HCT116 (cell line): ENCODE measurements at regions of chr6 and their contacts with region 1.

Region 1: GRCh38 chr6:99330159-99330558 is 19.3 kb downstream of the FAXC start:
- DNase-seq: peak; percentile 52
- ATAC-seq: peak; percentile 87
- H3K4me3 ChIP-seq: no peak overlapping the region
- H3K27ac ChIP-seq: no peak overlapping the region
- H3K4me1 ChIP-seq: no peaks in the 10 kb centered on the region
- H3K27me3 ChIP-seq: no peaks in the 10 kb centered on the region
- CTCF ChIP-seq: peak; percentile 58 to 89 (median 86)
- POLR2A ChIP-seq: no peak
- RAD21 ChIP-seq: peak; percentile 67

Region 2: GRCh38 chr6:99178168-99178567 is 152.0 kb before region 1 on chr6:
- CTCF ChIA-PET with region 1: no interaction called
- POLR2A ChIA-PET with region 1: no interaction called
- RAD21 ChIA-PET with region 1: no interaction called
- intact Hi-C with region 1: no loop called
- DNase-seq: peak; percentile 31
- ATAC-seq: peak; percentile 78
- H3K4me3 ChIP-seq: no peak overlapping the region
- H3K27ac ChIP-seq: no peak overlapping the region
- H3K4me1 ChIP-seq: peaks cover 0 to 15% of the 10 kb centered on the region in 2 experiments; a peak in 2 of 4 replicates
- H3K27me3 ChIP-seq: no peaks in the 10 kb centered on the region
- CTCF ChIP-seq: no peak
- POLR2A ChIP-seq: no peak
- RAD21 ChIP-seq: no peak

Region 3: DNA sequence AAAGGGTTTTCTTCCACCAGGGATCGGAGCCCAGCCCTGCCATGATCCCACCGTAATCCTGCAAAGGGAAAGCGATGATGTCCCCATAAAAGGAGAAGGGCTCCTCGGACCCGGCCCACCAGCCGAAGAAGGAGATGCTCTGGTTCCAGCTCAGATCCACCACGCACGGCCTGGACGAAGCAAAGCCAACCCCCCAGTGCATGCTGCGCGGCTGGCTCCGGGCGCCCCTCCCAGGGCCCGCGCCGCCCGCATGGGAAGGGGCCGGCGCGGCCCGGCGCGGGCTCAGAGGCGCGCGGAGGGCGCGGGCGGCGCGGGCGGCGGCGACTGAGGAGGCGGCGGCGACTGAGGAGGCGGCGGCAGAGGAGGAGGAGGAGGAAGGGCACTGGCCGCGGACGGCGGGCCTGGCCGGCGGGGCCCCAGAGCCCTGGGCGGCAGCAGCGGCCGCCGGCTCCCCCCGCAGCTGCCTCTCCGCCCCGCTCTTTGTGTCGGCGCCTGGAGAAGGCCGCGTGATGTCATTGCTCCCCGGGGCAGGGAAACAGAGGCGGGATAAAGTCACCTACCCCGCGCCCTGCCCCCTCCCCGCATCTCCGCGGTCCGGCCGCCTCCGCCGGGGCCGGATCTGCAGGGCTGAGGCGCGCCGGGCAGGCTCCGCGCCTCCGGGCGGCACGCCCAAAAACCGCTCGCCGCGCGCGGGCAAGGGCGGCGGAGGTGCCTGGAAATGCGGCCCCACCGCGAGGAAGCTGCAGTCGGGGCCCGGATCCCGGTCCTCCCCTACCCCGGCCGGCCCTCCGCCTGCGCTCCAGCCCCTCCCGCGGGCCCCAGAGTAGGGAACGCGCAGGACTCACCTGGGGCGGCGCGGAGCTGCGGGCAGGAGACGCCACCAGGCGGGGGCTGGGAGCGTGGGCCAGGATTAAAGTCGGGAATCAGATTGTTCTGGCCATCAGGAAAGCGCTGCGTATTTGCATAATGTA is 19.3 kb after region 1 on chr6 and contains the start of gene FAXC:
- CTCF ChIA-PET with region 1: interaction called, 10 read pairs
- POLR2A ChIA-PET with region 1: no interaction called
- RAD21 ChIA-PET with region 1: no interaction called
- intact Hi-C with region 1: no loop called
- DNase-seq: peak; percentile 16
- ATAC-seq: peak; percentile 91
- H3K4me3 ChIP-seq: peak within 1 kb of the TSS; percentile 51 to 67
- H3K27ac ChIP-seq: peak within 1 kb of the TSS; percentile 43; the same call in 1 of the 2 replicates
- H3K4me1 ChIP-seq: peaks cover 8 to 21% of the 10 kb centered on the region in 2 experiments; a peak in 3 of 4 replicates
- H3K27me3 ChIP-seq: no peaks in the 10 kb centered on the region
- CTCF ChIP-seq: peak; percentile 14 to 41 (median 29); a peak in 3 of 6 replicates
- POLR2A ChIP-seq: no peak
- RAD21 ChIP-seq: peak; percentile 51
- total RNA-seq, gene FAXC: 4.7 TPM

Region 4: GRCh38 chr6:99393698-99394531 is 63.8 kb after region 1 on chr6 and contains the start of gene COQ3:
- CTCF ChIA-PET with region 1: interaction called, 3 read pairs
- POLR2A ChIA-PET with region 1: interaction called, 3 read pairs
- RAD21 ChIA-PET with region 1: no interaction called
- intact Hi-C with region 1: loop called (anchors 2 kb)
- DNase-seq: peak; percentile 57
- ATAC-seq: peak; percentile 92
- H3K4me3 ChIP-seq: peak within 1 kb of the TSS; percentile 76 to 91
- H3K27ac ChIP-seq: peak within 1 kb of the TSS; percentile 77
- H3K4me1 ChIP-seq: peaks cover 7 to 12% of the 10 kb centered on the region in 2 experiments; a peak in 3 of 4 replicates
- H3K27me3 ChIP-seq: no peaks in the 10 kb centered on the region
- CTCF ChIP-seq: no peak
- POLR2A ChIP-seq: peak; percentile 72
- RAD21 ChIP-seq: no peak
- total RNA-seq, gene COQ3: 19.0 TPM

Region 5: DNA sequence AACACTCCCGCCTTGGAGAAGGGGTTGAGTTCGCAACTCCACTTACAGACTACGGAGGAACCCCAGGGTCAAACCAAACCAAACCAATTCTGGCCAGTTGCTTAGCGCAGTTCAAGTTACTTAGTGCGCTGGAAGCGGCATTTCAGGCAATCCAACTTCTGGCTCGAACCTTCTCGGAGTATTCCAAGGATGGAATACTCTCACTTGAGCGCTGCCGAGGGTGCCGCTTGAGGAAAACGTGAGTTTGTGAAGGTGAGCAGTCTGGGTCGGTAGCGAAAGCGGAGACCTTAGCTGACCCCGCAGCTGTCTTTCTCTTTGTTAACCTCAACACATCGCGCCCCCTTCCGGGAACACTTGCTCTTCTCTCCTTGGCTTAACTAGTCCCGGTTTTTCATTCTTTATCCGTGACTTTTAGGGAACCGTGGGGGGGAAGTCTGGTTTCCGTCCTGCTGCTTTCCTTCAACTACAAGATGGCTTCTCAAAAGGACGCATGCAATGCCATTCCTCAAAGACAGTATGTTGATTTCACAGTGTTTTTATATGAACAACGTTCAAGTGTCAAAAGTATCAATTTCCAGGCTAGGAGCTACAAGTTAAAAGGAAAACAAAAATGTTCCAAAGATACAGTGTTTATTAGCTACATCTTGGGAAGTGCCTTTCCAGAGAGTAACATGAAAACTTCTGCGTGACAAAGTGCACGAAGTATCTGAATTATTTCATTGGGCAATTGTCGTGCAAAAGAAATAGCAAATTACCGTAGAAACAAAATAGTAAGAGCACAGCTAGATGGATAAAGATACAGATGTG is 95.7 kb after region 1 on chr6:
- CTCF ChIA-PET with region 1: interaction called, 15 read pairs
- POLR2A ChIA-PET with region 1: no interaction called
- RAD21 ChIA-PET with region 1: interaction called, 3 read pairs
- intact Hi-C with region 1: loop called (anchors 1 kb)
- DNase-seq: peak; percentile 86
- ATAC-seq: peak; percentile 71
- H3K4me3 ChIP-seq: peak overlapping the region; percentile 95 to 99
- H3K27ac ChIP-seq: peak overlapping the region; percentile 86
- H3K4me1 ChIP-seq: peaks cover 14 to 26% of the 10 kb centered on the region in 2 experiments; a peak in 3 of 4 replicates
- H3K27me3 ChIP-seq: no peaks in the 10 kb centered on the region
- CTCF ChIP-seq: peak; percentile 47 to 56 (median 49)
- POLR2A ChIP-seq: peak; percentile 49
- RAD21 ChIP-seq: peak; percentile 58

Region 6: DNA sequence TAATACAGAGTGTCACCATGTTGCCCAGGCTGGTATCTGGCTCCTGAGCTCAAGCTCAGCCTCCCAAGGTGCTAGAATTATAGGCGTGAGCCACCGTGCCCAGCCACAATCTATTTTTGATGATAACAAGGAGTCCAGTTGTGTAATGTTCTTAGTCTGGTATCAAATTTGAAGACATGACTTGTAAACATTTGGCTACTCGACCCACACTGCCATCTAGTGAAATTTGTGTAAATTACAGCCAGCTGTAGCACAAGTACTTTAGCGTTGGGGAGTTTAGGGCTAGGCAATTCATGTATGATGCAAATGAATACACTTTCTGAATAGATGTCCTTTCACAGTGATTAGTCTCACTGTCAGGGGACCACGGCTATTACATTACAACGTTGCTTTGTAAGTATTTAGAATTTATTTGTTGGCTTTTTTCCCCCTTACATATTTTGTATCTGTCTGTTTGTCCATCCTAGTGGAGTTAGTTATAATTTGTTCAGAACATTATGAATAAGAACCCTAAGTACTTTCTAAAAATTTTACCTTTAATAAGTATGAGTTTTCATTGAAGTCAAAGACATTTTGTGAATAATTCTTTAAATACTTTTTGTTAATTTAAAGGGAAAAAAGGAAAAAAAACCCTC is 416.2 kb after region 1 on chr6:
- CTCF ChIA-PET with region 1: interaction called, 4 read pairs
- POLR2A ChIA-PET with region 1: no interaction called
- RAD21 ChIA-PET with region 1: no interaction called
- intact Hi-C with region 1: loop called (anchors 5 kb)
- DNase-seq: peak; percentile 76
- ATAC-seq: peak; percentile 89
- H3K4me3 ChIP-seq: no peak overlapping the region
- H3K27ac ChIP-seq: no peak overlapping the region
- H3K4me1 ChIP-seq: peaks cover 0 to 8% of the 10 kb centered on the region in 2 experiments; a peak in 2 of 4 replicates
- H3K27me3 ChIP-seq: no peaks in the 10 kb centered on the region
- CTCF ChIP-seq: peak; percentile 55 to 83 (median 69); a peak in 5 of 6 replicates
- POLR2A ChIP-seq: no peak
- RAD21 ChIP-seq: peak; percentile 81

Region 7: GRCh38 chr6:99790679-99791078 is 460.5 kb after region 1 on chr6:
- CTCF ChIA-PET with region 1: interaction called, 3 read pairs
- POLR2A ChIA-PET with region 1: no interaction called
- RAD21 ChIA-PET with region 1: no interaction called
- intact Hi-C with region 1: loop called (anchors 10 kb)
- DNase-seq: no peak
- ATAC-seq: no peak
- H3K4me3 ChIP-seq: no peak overlapping the region
- H3K27ac ChIP-seq: no peak overlapping the region
- H3K4me1 ChIP-seq: peaks cover 0 to 4% of the 10 kb centered on the region in 2 experiments; a peak in 2 of 4 replicates
- H3K27me3 ChIP-seq: no peaks in the 10 kb centered on the region
- CTCF ChIP-seq: peak in 2 of 3 experiments; percentile 41 to 44; a peak in 2 of 6 replicates
- POLR2A ChIP-seq: no peak
- RAD21 ChIP-seq: peak; percentile 56

Region 8: GRCh38 chr6:99822741-99823512 is 492.8 kb after region 1 on chr6:
- CTCF ChIA-PET with region 1: interaction called, 11 read pairs
- POLR2A ChIA-PET with region 1: no interaction called
- RAD21 ChIA-PET with region 1: interaction called in 1 of 2 experiments, 3 read pairs
- intact Hi-C with region 1: loop called (anchors 5 kb)
- DNase-seq: peak; percentile 37
- ATAC-seq: peak; percentile 90
- H3K4me3 ChIP-seq: no peak overlapping the region
- H3K27ac ChIP-seq: no peak overlapping the region
- H3K4me1 ChIP-seq: no peaks in the 10 kb centered on the region
- H3K27me3 ChIP-seq: no peaks in the 10 kb centered on the region
- CTCF ChIP-seq: peak; percentile 51 to 60 (median 56)
- POLR2A ChIP-seq: no peak
- RAD21 ChIP-seq: peak; percentile 78